Endothelial cell of umbilical vein (primary cell): ENCODE measurements at regions of chr16 and their contacts with region 1.

Region 1: DNA sequence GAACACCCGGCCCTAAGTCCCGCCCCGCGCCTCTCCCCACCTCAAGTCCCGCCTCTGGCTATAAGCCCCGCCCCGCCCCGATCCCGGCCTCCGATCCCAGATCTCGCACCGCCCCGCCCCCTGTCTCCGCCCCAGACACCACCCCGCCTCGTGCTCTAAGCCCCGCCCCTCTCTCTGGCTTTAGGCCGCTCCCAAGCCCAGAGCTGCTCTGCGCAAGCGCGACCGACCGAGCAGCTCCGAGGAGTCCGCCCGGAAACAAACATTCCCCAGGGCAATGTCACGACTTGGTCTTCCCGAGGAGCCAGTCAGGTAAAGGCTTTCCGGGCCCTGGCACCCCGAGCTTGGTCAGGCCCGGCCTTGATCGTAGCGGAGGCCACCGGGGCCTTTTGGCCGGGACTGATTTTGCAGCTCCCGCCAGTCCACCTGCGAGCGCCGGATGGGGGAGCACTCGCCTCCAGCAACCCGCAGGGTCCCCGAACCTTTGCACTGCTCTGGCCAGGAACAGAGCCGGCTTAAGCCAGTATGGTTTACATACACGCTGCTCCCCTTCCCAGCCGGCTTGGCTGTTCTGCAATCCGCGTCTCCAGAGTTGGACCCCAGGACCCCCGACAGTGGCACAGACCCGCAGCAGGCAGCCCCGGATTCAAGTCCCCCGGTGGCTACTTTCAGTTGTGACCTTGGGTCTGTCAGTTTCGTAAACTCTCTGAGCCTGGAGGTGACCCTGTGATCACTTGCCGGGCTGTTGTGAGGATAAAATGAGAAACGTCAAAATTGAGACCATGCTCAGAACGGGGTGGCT is at the start of gene NUDT7:
- DNase-seq: peak; percentile 97
- H3K4me3 ChIP-seq: peak within 1 kb of the TSS; percentile 79 to 95 (median 89)
- H3K27ac ChIP-seq: peak within 1 kb of the TSS; percentile 79
- H3K4me1 ChIP-seq: peaks cover 10% of the 10 kb centered on the region
- H3K27me3 ChIP-seq: no peaks in the 10 kb centered on the region
- CTCF ChIP-seq: peak in 1 of 2 donors; percentile 20
- POLR2A ChIP-seq: no peak
- total RNA-seq, gene NUDT7: 5.0 and 6.2 TPM in 2 replicates

Region 2: GRCh38 chr16:77308163-77308561 is 414.3 kb before region 1 on chr16:
- CTCF ChIA-PET with region 1: no interaction called
- POLR2A ChIA-PET with region 1: no interaction called
- dilution Hi-C with region 1: no loop called
- intact Hi-C with region 1: loop called (anchors 5 kb)
- DNase-seq: peak; percentile 87
- H3K4me3 ChIP-seq: no peak overlapping the region
- H3K27ac ChIP-seq: peak overlapping the region; percentile 86
- H3K4me1 ChIP-seq: peaks cover 22% of the 10 kb centered on the region
- H3K27me3 ChIP-seq: no peaks in the 10 kb centered on the region
- CTCF ChIP-seq: no peak
- POLR2A ChIP-seq: no peak

Region 3: GRCh38 chr16:77675464-77676324 is 46.8 kb before region 1 on chr16:
- CTCF ChIA-PET with region 1: no interaction called
- POLR2A ChIA-PET with region 1: no interaction called
- dilution Hi-C with region 1: no loop called
- intact Hi-C with region 1: loop called (anchors 5 kb)
- DNase-seq: peak; percentile 75
- H3K4me3 ChIP-seq: no peak overlapping the region
- H3K27ac ChIP-seq: no peak overlapping the region
- H3K4me1 ChIP-seq: no peaks in the 10 kb centered on the region
- H3K27me3 ChIP-seq: peaks cover 0 to 6% of the 10 kb centered on the region in 2 experiments
- CTCF ChIP-seq: peak; percentile 74 to 96
- POLR2A ChIP-seq: no peak

Region 4: DNA sequence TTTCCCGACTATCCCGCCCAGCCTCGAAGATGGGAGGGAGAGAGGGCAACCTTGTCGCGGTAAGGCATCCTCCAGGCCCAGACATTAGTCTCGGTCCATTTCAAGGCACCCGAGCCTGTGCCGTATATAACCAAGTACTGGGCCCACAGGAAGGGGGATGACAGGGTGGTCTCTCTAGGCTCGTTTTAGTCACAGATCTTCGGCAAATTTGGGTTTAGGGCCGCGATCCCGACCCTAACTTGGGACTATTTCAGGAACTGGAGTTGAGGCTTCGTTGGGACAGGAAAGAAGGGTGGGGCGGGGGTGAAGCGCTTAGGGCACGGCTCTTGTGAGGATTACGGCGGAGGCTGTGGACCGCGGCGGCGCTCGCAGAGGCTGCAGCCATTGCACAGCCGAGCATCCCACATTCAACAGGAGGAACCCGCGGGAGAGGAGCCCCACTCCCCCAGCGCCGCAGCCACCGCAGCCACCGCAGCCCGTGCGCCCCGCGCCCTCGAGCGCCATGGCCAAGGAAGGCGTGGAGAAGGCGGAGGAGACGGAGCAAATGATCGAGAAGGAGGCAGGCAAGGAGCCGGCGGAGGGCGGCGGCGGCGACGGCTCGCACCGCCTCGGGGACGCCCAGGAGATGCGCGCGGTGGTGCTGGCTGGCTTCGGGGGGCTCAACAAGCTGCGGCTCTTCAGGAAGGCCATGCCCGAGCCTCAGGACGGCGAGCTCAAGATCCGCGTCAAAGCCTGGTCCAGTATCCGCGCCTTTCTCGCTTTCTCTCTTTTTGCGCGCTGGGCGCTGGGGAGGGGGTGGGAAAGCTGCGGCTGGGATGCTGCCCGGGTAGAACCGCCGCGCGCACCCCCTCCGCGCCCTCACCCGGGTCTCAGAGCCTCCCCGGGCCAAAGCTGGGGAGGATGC is 65.9 kb after region 1 on chr16 and contains the start of gene VAT1L:
- CTCF ChIA-PET with region 1: interaction called, 7 read pairs
- POLR2A ChIA-PET with region 1: no interaction called
- dilution Hi-C with region 1: no loop called
- intact Hi-C with region 1: loop called (anchors 2 kb)
- DNase-seq: peak; percentile 54
- H3K4me3 ChIP-seq: peak within 1 kb of the TSS; percentile 41 to 61 (median 50)
- H3K27ac ChIP-seq: no peak within 1 kb of the TSS
- H3K4me1 ChIP-seq: peaks cover 4% of the 10 kb centered on the region
- H3K27me3 ChIP-seq: peaks cover 28 to 41% of the 10 kb centered on the region in 2 experiments
- CTCF ChIP-seq: no peak
- POLR2A ChIP-seq: no peak
- total RNA-seq, gene VAT1L: 1.5 and 2.1 TPM in 2 replicates

Region 5: DNA sequence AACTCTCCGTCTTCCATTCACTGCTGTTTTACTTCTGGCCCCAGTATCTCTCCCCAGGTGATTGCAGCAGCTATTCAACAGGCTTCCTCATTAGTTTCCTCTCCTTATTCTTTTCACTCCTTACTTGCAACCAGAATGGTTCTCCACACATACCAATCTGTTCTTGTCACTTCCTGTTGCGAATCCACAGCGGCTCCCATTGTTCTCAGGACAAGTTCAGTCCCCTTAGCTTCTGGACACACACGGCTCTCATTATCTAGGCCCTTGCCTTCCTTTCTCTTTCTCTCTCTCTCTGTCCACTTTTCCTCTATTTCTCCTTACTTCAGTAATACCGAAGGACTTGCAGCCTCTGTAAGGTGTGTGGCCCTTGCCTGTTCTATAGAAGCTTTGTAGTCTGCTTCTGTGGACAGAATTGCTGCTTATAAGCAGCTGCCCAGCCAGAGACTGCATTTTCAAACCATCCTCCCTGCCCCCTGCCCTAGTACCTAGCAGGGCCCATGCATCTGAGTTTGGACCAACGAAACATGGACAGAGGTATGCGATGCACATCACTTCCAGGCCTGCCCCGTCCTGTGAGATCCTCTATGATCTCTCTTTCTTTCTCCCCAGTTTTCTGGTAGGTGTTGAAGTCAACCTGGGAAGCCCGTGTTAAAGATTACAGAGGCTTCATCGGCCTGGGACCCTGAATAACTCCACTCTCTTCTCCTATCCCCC is 111.6 kb after region 1 on chr16:
- CTCF ChIA-PET with region 1: interaction called, 8 read pairs
- POLR2A ChIA-PET with region 1: interaction called, 6 read pairs
- dilution Hi-C with region 1: no loop called
- intact Hi-C with region 1: loop called (anchors 1 kb)
- DNase-seq: peak; percentile 89
- H3K4me3 ChIP-seq: no peak overlapping the region
- H3K27ac ChIP-seq: peak overlapping the region; percentile 99
- H3K4me1 ChIP-seq: peaks cover 14% of the 10 kb centered on the region
- H3K27me3 ChIP-seq: no peaks in the 10 kb centered on the region
- CTCF ChIP-seq: no peak
- POLR2A ChIP-seq: peak; percentile 53

Region 6: DNA sequence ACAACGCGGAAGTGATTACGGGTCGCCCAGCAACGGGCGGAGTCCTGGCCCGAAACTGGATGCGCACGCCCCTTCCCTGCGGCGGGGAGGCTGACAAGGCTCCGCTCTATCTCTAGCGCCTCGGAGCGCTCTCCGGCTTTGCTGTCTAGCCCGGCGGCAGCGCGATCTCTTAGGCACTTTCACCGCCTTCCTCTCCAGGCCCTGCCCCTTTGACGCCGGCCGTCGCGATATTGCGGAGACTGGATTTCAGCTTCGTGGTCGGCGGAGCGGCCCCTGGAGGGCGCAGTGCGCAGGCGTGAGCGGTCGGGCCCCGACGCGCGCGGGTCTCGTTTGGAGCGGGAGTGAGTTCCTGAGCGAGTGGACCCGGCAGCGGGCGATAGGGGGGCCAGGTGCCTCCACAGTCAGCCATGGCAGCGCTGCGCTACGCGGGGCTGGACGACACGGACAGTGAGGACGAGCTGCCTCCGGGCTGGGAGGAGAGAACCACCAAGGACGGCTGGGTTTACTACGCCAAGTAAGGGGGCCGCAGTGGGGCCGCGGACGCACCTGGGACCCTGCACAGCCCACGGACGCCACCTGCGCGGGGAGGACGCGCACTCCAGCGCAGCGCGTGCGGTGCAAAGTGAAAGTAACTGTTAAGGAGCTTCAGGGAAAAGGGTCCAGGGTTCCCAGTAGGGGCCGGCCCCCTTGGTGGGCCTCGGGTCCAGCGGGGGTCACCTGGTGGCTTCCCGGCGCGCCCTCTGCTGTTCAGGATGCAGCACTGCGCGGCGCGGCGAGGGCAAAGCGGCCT is 377.1 kb after region 1 on chr16 and contains the start of gene WWOX:
- CTCF ChIA-PET with region 1: no interaction called
- POLR2A ChIA-PET with region 1: no interaction called
- dilution Hi-C with region 1: no loop called
- intact Hi-C with region 1: loop called (anchors 1 kb)
- DNase-seq: peak; percentile 99
- H3K4me3 ChIP-seq: peak within 1 kb of the TSS; percentile 47 to 79 (median 54)
- H3K27ac ChIP-seq: peak within 1 kb of the TSS; percentile 55
- H3K4me1 ChIP-seq: peaks cover 9% of the 10 kb centered on the region
- H3K27me3 ChIP-seq: no peaks in the 10 kb centered on the region
- CTCF ChIP-seq: peak; percentile 87 to 96
- POLR2A ChIP-seq: no peak
- total RNA-seq, gene WWOX: 12.0 and 12.5 TPM in 2 replicates